ENCODE measurements at regions of chr4 and their contacts with region 1.

Region 1: DNA sequence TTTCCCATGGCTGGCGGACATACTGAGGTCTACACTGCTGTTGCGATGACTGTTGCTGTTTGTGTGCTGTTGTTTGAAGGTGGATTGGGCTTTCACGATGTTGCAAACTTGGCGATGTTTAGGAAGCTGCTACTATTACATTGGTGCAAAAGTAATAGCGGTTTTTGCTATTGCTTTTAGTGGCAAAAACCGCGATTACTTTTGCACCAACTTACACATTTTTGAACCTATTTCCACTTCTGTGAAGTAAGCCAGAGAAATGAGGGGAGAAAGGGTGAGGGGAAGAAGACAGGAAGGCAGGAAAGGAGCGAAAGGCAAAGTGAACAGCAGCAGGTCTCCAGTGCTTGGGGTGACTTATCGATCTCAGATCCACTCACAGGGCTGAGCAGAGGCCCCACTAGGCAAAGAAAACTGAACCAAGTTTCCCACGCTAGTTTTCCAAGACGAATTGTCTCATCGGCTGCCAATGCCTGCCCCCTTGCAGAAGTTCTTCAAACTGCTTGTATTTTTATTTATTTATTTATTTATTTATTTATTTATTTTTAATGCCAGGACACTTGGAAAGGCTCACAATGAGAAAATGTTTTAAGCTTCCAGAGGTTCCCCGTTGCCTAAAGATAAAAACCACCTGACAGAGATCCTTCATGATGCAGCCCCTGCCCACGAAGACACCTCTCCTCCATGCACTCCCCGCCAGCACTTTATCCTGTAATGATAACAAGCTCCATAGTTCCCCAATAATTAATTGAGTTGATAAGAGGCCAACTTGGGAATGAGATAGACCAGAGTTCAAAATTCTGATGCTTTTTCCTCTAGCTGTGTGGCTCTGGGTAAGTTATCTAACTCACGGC is 43.3 kb downstream of the QDPR start:
- DNase-seq: no peak
- H3K4me3 ChIP-seq: no peak overlapping the region
- H3K27ac ChIP-seq: no peak overlapping the region
- H3K4me1 ChIP-seq: no peaks in the 10 kb centered on the region
- H3K27me3 ChIP-seq: no peaks in the 10 kb centered on the region; a peak in 1 of 7 replicates
- CTCF ChIP-seq: peak; percentile 5 to 38 (median 23); a peak in 3 of 4 replicates
- EP300 ChIP-seq: no peak
- POLR2A ChIP-seq: no peak
- RAD21 ChIP-seq: peak; percentile 55 to 63

Region 2: DNA sequence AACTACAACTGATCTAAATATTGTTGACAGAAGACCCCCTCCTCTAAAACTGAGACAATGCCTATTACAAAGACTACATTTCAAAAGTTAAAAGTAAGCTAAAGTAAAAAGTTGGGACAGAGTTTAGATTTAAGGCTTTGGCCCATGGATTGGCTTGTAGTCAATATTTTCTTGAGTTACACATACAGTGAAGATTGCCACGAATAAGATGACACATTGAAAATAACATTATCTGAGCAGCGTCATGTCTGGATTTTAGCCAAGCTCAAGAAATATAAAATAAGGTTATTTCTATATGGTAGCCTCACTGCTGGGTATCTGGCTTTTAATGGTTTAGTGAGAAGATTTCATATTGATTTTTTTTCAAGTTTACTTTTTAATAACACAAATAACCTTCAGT is 303.9 kb before region 1 on chr4:
- CTCF ChIA-PET with region 1: no interaction called
- POLR2A ChIA-PET with region 1: no interaction called
- DNase-seq: no peak
- H3K4me3 ChIP-seq: no peak overlapping the region
- H3K27ac ChIP-seq: no peak overlapping the region
- H3K4me1 ChIP-seq: peaks cover 0 to 5% (median 1%) of the 10 kb centered on the region in 4 experiments; a peak in 3 of 7 replicates
- H3K27me3 ChIP-seq: peaks cover 0 to 6% (median 2%) of the 10 kb centered on the region in 4 experiments; a peak in 3 of 7 replicates
- CTCF ChIP-seq: no peak
- EP300 ChIP-seq: no peak
- POLR2A ChIP-seq: no peak
- RAD21 ChIP-seq: no peak

Region 3: GRCh38 chr4:17336524-17336961 is 132.1 kb before region 1 on chr4:
- CTCF ChIA-PET with region 1: interaction called, 10 read pairs
- POLR2A ChIA-PET with region 1: no interaction called
- DNase-seq: no peak
- H3K4me3 ChIP-seq: no peak overlapping the region
- H3K27ac ChIP-seq: no peak overlapping the region
- H3K4me1 ChIP-seq: peaks cover 0 to 2% (median 0%) of the 10 kb centered on the region in 4 experiments; a peak in 1 of 7 replicates
- H3K27me3 ChIP-seq: no peaks in the 10 kb centered on the region
- CTCF ChIP-seq: no peak
- EP300 ChIP-seq: no peak
- POLR2A ChIP-seq: no peak
- RAD21 ChIP-seq: no peak

Region 4: GRCh38 chr4:17347445-17347844 is 121.2 kb before region 1 on chr4:
- CTCF ChIA-PET with region 1: interaction called, 27 read pairs
- POLR2A ChIA-PET with region 1: interaction called, 3 read pairs
- DNase-seq: peak in 1 of 2 experiments; percentile 55
- H3K4me3 ChIP-seq: no peak overlapping the region
- H3K27ac ChIP-seq: no peak overlapping the region
- H3K4me1 ChIP-seq: no peaks in the 10 kb centered on the region; a peak in 1 of 7 replicates
- H3K27me3 ChIP-seq: no peaks in the 10 kb centered on the region
- CTCF ChIP-seq: peak; percentile 38 to 65 (median 62)
- EP300 ChIP-seq: no peak
- POLR2A ChIP-seq: no peak
- RAD21 ChIP-seq: peak; percentile 76 to 82

Region 5: DNA sequence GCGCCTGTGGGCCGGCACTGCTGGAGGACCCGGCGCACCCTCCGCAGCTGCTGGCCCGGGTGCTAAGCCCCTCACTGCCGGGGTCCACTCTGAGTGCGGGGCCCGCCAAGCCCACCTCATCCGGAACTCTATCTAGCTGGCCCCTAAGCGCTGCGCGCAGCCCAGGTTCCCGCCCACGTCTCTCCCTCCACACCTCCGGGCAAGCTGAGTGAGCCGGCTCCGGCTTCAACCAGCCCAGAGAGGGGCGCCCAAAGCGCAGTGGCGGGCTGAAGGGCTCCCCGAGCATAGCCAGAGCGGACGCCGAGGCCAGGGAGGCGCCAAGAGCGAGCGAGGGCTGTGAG is 31.9 kb before region 1 on chr4:
- CTCF ChIA-PET with region 1: interaction called, 14 read pairs
- POLR2A ChIA-PET with region 1: no interaction called
- DNase-seq: no peak
- H3K4me3 ChIP-seq: no peak overlapping the region
- H3K27ac ChIP-seq: no peak overlapping the region
- H3K4me1 ChIP-seq: no peaks in the 10 kb centered on the region
- H3K27me3 ChIP-seq: no peaks in the 10 kb centered on the region
- CTCF ChIP-seq: no peak
- EP300 ChIP-seq: no peak
- POLR2A ChIP-seq: no peak
- RAD21 ChIP-seq: no peak

Region 6: DNA sequence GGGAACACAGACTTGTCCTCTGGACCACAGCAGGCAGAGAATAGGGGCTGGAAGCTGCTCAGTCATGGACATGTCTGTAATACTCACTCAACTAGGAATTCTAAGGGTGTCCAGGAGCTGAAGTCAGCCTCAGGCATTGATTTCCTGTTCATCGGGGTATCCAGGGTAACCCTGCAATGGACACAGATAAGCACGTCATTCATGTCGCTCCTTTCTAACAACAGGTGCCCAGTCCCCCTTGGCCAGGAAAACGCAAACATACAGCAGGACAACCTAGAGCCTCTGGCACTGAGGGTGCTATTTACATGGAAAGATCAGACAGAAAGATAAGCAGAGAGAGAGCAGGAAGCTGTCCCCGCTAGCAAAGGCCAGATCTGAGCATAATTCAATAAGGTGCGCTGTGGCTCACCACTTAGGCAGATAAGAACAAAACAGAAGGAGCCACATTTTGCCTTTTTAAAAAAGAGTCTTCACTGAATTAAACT is 22.0 kb after region 1 on chr4:
- CTCF ChIA-PET with region 1: interaction called, 13 read pairs
- POLR2A ChIA-PET with region 1: no interaction called
- DNase-seq: no peak
- H3K4me3 ChIP-seq: no peak overlapping the region
- H3K27ac ChIP-seq: no peak overlapping the region
- H3K4me1 ChIP-seq: peaks cover 0 to 6% (median 4%) of the 10 kb centered on the region in 4 experiments; a peak in 4 of 7 replicates
- H3K27me3 ChIP-seq: no peaks in the 10 kb centered on the region
- CTCF ChIP-seq: no peak
- EP300 ChIP-seq: no peak
- POLR2A ChIP-seq: no peak
- RAD21 ChIP-seq: no peak

Region 7: DNA sequence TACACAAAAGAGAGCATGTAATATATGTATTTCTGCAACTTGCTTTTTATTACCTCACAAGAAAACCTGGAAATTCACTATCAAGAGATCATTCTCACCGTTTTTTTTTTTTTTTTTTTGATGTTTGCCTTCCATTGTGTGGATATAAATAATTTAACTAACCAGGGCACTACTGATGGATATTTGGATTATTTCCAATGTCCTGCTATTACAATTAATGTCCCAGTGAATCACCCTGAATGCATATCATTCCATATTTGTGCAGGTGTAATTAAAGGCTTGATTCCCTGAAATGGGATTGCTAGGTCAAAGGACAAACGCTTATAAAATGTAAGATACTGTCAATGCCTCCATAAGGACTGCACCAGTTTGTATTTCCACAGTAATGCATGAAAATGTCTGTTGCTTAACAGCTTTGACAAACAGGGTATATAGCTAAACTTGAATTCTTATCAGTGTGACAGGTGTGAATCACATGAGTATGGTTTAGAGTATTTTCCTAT is 430.0 kb after region 1 on chr4:
- CTCF ChIA-PET with region 1: no interaction called
- POLR2A ChIA-PET with region 1: no interaction called
- DNase-seq: no peak
- H3K4me3 ChIP-seq: no peak overlapping the region
- H3K27ac ChIP-seq: no peak overlapping the region
- H3K4me1 ChIP-seq: no peaks in the 10 kb centered on the region
- H3K27me3 ChIP-seq: peaks cover 0 to 1% (median 0%) of the 10 kb centered on the region in 4 experiments; a peak in 1 of 7 replicates
- CTCF ChIP-seq: no peak
- EP300 ChIP-seq: no peak
- POLR2A ChIP-seq: no peak
- RAD21 ChIP-seq: no peak

Measured in H1 (cell line).